ENCODE measurements at regions of chr6 and their contacts with region 1.

Region 1: GRCh38 chr6:136792410-136793262 is at the start of gene MAP3K5:
- DNase-seq: no peak
- H3K4me3 ChIP-seq: peak within 1 kb of the TSS; percentile 86
- CTCF ChIP-seq: peak; percentile 98

Region 2: GRCh38 chr6:136113736-136114173 is 678.9 kb before region 1 on chr6:
- CTCF ChIA-PET with region 1: no interaction called
- POLR2A ChIA-PET with region 1: no interaction called
- DNase-seq: peak; percentile 60
- H3K4me3 ChIP-seq: no peak overlapping the region
- CTCF ChIP-seq: no peak

Region 3: DNA sequence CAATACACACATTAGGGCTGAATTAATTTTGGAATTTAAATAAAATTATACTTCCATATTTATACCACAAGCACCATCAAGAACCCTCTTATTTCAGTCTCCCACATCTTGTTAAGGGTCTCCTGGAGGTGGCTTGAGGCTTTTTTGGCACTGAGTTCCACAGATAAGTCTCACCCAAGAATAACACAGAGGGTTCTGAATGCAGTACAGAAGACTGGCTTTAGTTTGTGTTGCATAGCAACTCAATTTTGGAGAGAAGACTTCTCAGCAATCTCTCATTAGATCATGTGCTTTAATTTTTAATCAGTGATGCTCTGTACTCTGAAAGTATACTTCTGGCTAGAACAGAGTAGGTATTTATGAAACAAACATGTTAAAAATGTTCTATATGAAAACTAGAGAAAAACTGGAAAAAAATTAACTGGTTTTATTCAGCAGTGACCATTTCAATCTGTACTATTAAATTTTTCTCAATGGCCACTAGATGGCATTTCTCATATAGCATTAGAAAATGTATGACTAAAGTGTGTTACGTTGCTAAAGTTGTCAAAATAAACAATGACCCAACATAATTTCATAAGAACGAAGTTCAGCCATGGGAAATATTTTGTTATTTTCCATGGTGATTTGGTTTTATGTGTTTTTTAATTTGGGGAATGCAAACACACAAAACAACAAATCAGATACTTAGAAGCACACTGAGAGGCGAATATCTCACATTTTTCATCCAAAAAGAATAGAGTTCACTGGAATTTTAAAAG is 209.7 kb before region 1 on chr6:
- CTCF ChIA-PET with region 1: interaction called, 146 read pairs
- POLR2A ChIA-PET with region 1: no interaction called
- DNase-seq: peak; percentile 63
- H3K4me3 ChIP-seq: no peak overlapping the region
- CTCF ChIP-seq: peak; percentile 19

Region 4: GRCh38 chr6:136607932-136608772 is 184.5 kb before region 1 on chr6:
- CTCF ChIA-PET with region 1: interaction called, 40 read pairs
- POLR2A ChIA-PET with region 1: no interaction called
- DNase-seq: no peak
- H3K4me3 ChIP-seq: no peak overlapping the region
- CTCF ChIP-seq: peak; percentile 68

Region 5: DNA sequence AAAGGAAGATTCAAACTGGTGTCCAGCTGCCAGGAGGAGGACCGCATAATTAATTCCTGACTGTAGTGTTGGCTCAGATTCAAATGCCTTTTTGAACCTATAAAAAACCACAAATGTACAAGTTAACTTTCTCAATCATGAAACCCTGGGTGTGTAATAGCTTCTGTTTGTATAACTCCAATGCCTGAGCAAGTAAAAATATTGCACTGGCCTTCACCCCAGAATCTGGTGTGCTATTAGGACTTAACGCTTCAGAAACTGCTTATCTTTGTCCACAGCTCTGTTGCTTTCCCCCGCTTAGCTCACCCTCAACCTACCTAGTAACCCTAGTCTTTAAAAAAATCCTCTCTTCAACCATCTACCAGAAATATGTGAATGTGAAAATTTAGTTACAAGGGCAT is 123.3 kb before region 1 on chr6:
- CTCF ChIA-PET with region 1: interaction called, 13 read pairs
- POLR2A ChIA-PET with region 1: no interaction called
- DNase-seq: peak; percentile 80
- H3K4me3 ChIP-seq: no peak overlapping the region
- CTCF ChIP-seq: no peak

Region 6: GRCh38 chr6:136803608-136804007 is 11.0 kb after region 1 on chr6:
- CTCF ChIA-PET with region 1: interaction called, 23 read pairs
- POLR2A ChIA-PET with region 1: no interaction called
- DNase-seq: no peak
- H3K4me3 ChIP-seq: no peak overlapping the region
- CTCF ChIP-seq: no peak